Naive thymus-derived CD8-positive, alpha-beta T cell (primary cell): ENCODE measurements at regions of chr12 and their contacts with region 1.

Region 1: GRCh38 chr12:14365294-14366208 is at the start of gene ATF7IP:
- DNase-seq: peak; percentile 92 to 98 (median 96)
- ATAC-seq: peak; percentile 81 to 83
- H3K4me3 Mint-ChIP-seq: peak within 1 kb of the TSS; percentile 78 to 99 (median 93)
- H3K27ac Mint-ChIP-seq: peak within 1 kb of the TSS; percentile 91 to 99 (median 96)
- H3K4me1 Mint-ChIP-seq: peaks cover 6 to 60% (median 24%) of the 10 kb centered on the region in 4 donors
- H3K27me3 Mint-ChIP-seq: peaks cover 0 to 2% (median 0%) of the 10 kb centered on the region in 5 donors
- polyA plus RNA-seq, gene ATF7IP: 70.6 to 84.9 (median 83.1) TPM

Region 2: DNA sequence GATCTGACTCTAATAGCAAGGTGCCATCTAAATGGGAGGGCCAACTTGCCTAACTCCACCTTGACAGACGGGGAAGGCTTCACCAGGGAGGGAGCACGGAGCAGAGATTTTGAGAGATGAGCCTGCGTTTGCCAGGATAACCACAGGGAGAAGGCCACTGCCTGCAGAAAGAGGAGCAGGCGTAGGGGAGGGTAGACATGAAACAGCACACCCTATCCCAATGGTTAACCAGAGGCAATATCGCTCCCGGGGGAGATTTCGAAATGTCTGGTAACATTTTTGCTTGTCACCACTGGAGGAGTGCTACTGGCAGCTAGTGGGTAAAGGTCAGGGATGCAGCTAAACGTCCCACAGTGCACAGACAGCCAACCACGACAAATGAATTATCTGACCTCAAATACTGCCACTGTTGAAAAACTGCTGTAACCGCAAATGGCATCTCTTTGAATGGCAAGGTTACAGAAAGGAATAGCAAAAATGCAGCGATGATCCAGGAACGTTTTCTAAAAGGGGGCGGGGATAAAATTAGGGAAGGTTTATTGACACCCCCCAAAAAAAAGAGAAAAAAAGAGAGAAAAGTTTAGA is 126.1 kb before region 1 on chr12:
- POLR2A ChIA-PET with region 1: interaction called, 32 read pairs
- DNase-seq: peak in 2 of 10 donors; percentile 4 to 9
- ATAC-seq: peak; percentile 43 to 63
- H3K4me3 Mint-ChIP-seq: peak overlapping the region; percentile 64 to 87 (median 80)
- H3K27ac Mint-ChIP-seq: peak overlapping the region in 9 of 10 donors; percentile 15 to 97 (median 73)
- H3K4me1 Mint-ChIP-seq: peaks cover 8 to 30% (median 17%) of the 10 kb centered on the region in 4 donors
- H3K27me3 Mint-ChIP-seq: no peaks in the 10 kb centered on the region

Region 3: GRCh38 chr12:14257734-14258574 is 107.6 kb before region 1 on chr12:
- POLR2A ChIA-PET with region 1: interaction called, 142 read pairs
- DNase-seq: peak; percentile 61 to 88 (median 77)
- ATAC-seq: peak; percentile 50 to 66
- H3K4me3 Mint-ChIP-seq: peak overlapping the region; percentile 70 to 87 (median 78)
- H3K27ac Mint-ChIP-seq: peak overlapping the region; percentile 88 to 99 (median 98)
- H3K4me1 Mint-ChIP-seq: peaks cover 23 to 79% (median 57%) of the 10 kb centered on the region in 4 donors
- H3K27me3 Mint-ChIP-seq: no peaks in the 10 kb centered on the region

Region 4: DNA sequence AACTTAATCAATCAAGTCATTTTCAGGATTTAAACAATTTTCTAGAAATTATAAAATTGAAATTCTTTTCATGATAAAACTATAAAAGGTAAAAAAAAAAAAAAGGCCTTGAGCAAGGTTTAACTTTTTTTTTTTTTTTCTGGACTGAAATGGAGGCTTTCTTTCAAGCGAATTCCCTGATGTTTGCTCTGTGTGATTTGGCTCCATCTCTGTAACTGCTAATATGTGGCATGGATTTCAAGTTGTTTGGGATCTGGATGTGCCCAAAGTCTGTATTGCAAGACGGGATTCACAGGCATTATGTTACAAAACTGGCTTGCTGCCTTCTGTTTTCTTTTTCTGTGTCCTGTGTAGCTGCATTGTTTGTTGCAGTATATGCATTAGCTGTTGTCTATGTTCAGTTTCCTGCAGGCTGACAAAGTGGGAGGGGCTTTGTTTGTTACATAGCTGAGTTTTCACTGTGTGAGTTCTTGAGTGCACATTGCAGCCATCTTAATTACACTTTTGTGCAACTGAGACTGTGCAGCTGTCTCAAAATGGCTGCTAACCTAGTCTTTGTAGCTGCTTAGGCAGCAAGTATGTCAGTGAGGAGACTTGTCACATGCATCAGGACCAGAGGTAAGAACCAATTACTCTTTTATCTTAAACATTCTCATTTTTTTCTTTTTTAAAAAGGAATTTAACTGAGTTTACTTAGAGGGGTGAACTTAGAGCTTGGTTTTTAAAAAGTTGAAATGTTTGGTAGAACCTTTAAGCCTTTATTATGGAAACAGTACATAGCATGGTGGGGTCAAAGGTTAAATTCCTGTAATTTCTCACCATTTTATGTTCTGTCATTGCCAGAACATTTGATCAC is 19.5 kb after region 1 on chr12:
- POLR2A ChIA-PET with region 1: interaction called, 77 read pairs
- DNase-seq: peak in 9 of 10 donors; percentile 29 to 80 (median 75)
- ATAC-seq: peak; percentile 92 to 96
- H3K4me3 Mint-ChIP-seq: peak overlapping the region; percentile 46 to 87 (median 78)
- H3K27ac Mint-ChIP-seq: peak overlapping the region; percentile 85 to 99 (median 92)
- H3K4me1 Mint-ChIP-seq: peaks cover 20 to 73% (median 57%) of the 10 kb centered on the region in 4 donors
- H3K27me3 Mint-ChIP-seq: no peaks in the 10 kb centered on the region

Region 5: GRCh38 chr12:14394317-14395073 is 28.9 kb after region 1 on chr12:
- POLR2A ChIA-PET with region 1: interaction called, 24 read pairs
- DNase-seq: peak in 6 of 10 donors; percentile 25 to 82 (median 66)
- ATAC-seq: peak; percentile 65 to 77
- H3K4me3 Mint-ChIP-seq: peak overlapping the region; percentile 46 to 85 (median 75)
- H3K27ac Mint-ChIP-seq: peak overlapping the region; percentile 92 to 99 (median 94)
- H3K4me1 Mint-ChIP-seq: peaks cover 20 to 93% (median 70%) of the 10 kb centered on the region in 4 donors
- H3K27me3 Mint-ChIP-seq: no peaks in the 10 kb centered on the region

Region 6: GRCh38 chr12:14410841-14411569 is 45.5 kb after region 1 on chr12:
- POLR2A ChIA-PET with region 1: interaction called, 37 read pairs
- DNase-seq: peak in 1 of 10 donors; percentile 27
- ATAC-seq: peak; percentile 42 to 51
- H3K4me3 Mint-ChIP-seq: peak overlapping the region in 6 of 10 donors; percentile 26 to 74 (median 65)
- H3K27ac Mint-ChIP-seq: peak overlapping the region in 7 of 10 donors; percentile 2 to 86 (median 37)
- H3K4me1 Mint-ChIP-seq: peaks cover 18 to 83% (median 61%) of the 10 kb centered on the region in 4 donors
- H3K27me3 Mint-ChIP-seq: no peaks in the 10 kb centered on the region

Region 7: DNA sequence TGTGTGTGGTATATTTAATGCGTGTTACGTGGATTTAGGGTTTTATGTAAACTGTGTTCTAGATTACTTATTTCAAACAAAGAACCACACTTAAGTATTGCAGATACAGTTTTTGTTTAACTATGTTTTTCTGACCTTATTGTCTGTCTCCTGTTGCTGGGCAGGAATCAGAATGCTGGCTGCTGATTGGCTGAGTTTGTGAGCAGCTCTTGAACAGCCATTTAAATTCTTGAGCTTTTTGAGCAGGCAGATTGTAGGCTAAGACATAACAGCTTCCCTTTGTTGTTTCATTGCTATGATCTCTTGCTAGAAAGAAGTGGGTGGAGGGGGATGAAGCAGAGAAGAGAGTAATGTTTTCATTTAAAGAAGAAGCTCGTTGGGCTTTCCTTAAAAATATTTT is 52.2 kb after region 1 on chr12:
- POLR2A ChIA-PET with region 1: interaction called, 50 read pairs
- DNase-seq: peak; percentile 53 to 88 (median 78)
- ATAC-seq: peak; percentile 82 to 86
- H3K4me3 Mint-ChIP-seq: peak overlapping the region; percentile 68 to 92 (median 83)
- H3K27ac Mint-ChIP-seq: peak overlapping the region in 9 of 10 donors; percentile 71 to 96 (median 90)
- H3K4me1 Mint-ChIP-seq: peaks cover 20 to 77% (median 59%) of the 10 kb centered on the region in 4 donors
- H3K27me3 Mint-ChIP-seq: no peaks in the 10 kb centered on the region